ENCODE measurements at regions of chr19 and their contacts with region 1.

Region 1: GRCh38 chr19:35648017-35648961 is at the start of gene COX6B1:
- DNase-seq: peak; percentile 94

Region 2: GRCh38 chr19:35612559-35613321 is 35.5 kb before region 1 on chr19 and contains the start of gene HAUS5:
- CTCF ChIA-PET with region 1: interaction called, 6 read pairs
- POLR2A ChIA-PET with region 1: interaction called, 16 read pairs
- DNase-seq: peak; percentile 99

Region 3: DNA sequence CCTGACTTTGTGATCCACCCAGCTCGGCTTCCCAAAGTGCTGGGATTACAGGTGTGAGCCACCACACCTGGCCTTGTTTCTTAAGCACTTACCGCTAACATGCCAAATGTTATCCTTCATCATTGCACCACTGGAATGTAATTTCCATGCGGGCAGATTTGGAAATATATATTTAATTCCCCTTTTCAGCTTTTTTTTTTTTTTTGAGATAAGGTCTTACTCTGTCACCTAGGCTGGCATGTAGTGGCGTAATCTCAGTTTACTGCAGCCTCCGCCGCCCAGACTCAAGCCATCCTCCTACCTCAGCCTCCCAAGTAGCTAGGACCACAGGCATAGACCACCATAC is 13.7 kb after region 1 on chr19:
- CTCF ChIA-PET with region 1: no interaction called
- POLR2A ChIA-PET with region 1: interaction called, 15 read pairs
- DNase-seq: no peak

Region 4: DNA sequence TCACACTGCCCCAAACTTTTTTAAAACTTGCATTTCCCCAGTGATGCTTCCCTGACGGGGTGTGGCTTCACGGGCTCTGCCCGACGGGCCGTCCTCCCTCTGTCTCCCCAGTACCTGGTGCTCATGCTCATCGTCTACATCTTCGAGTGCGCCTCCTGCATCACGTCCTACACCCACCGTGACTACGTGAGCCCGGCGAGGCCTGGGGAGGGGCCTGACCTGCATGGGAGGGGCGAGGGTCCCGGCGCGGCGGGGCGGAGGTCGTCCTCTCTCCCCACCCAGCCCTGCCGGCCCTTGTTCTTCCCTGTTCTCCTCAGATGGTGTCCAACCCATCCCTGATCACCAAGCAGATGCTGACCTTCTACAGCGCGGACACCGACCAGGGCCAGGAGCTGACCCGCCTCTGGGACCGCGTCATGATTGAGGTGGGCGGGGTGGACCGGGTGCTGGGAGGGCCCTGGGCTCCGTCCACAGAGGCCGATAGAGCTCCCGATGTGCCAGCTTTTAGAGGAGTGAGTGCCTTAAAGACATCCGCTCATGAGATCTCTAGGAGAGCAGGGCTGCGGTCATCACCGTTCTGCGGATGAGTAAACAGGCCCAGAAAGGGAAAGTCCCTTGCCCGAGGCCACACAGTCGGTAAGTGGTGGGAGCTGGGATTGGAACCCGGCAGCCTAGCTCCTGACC is 25.0 kb after region 1 on chr19:
- CTCF ChIA-PET with region 1: no interaction called
- POLR2A ChIA-PET with region 1: interaction called, 10 read pairs
- DNase-seq: peak; percentile 46